ENCODE measurements at regions of chr12 and their contacts with region 1.

Region 1: GRCh38 chr12:57111031-57111734 is at the start of gene STAT6:
- DNase-seq: peak; percentile 96
- H3K4me3 Mint-ChIP-seq: peak within 1 kb of the TSS; percentile 92
- H3K27ac Mint-ChIP-seq: peak within 1 kb of the TSS; percentile 92
- H3K4me1 Mint-ChIP-seq: peaks cover 47% of the 10 kb centered on the region
- H3K27me3 Mint-ChIP-seq: peaks cover 1% of the 10 kb centered on the region
- total RNA-seq, gene STAT6: 304 and 319 TPM in 2 replicates

Region 2: DNA sequence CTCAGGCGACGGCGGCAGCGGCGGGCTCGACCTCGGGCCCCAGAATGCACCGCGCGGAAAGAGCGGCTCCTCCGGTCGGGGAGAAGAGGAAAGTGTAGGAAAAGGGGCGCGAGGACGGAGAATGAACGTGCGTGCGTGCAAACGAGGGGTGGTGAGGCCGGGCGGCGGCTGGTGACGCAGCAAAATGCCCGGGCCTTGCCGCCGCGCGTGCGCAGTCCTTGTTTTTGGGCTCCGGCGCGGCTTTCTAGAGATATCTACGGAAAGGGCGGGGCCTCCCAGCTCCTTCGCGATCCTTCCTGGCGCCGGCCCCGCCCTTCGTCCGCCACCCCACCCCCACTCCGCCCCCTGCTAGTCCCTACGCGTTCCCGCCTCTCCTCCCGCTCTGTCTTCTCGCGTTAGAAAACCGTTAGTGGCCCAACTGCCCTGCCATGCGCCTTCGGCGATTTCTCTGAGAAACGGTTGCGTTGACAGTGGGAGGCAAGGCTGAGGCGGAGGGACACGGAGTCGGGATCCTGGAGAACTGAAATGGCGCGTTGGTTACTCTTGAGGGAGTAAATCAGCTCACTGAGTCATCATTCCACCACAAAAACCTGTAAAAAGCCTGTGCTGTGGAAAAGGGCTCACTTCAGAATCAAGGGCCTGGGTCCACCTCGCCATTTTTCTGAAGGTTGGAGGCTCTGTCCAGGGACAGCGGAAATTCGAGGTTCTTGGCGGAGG is 422.9 kb before region 1 on chr12 and contains the start of gene PTGES3:
- intact Hi-C with region 1: loop called (anchors 2 kb)
- DNase-seq: peak; percentile 99
- H3K4me3 Mint-ChIP-seq: peak within 1 kb of the TSS; percentile 99
- H3K27ac Mint-ChIP-seq: peak within 1 kb of the TSS; percentile 97
- H3K4me1 Mint-ChIP-seq: peaks cover 24% of the 10 kb centered on the region
- H3K27me3 Mint-ChIP-seq: no peaks in the 10 kb centered on the region
- total RNA-seq, gene PTGES3: 351 and 357 TPM in 2 replicates

Region 3: GRCh38 chr12:57005980-57006808 is 105.0 kb before region 1 on chr12 and contains the start of gene ZBTB39:
- intact Hi-C with region 1: loop called (anchors 1 kb)
- DNase-seq: peak; percentile 92
- H3K4me3 Mint-ChIP-seq: peak within 1 kb of the TSS; percentile 93
- H3K27ac Mint-ChIP-seq: peak within 1 kb of the TSS; percentile 86
- H3K4me1 Mint-ChIP-seq: peaks cover 44% of the 10 kb centered on the region
- H3K27me3 Mint-ChIP-seq: no peaks in the 10 kb centered on the region
- total RNA-seq, gene ZBTB39: 11.0 TPM in 2 replicates

Region 4: DNA sequence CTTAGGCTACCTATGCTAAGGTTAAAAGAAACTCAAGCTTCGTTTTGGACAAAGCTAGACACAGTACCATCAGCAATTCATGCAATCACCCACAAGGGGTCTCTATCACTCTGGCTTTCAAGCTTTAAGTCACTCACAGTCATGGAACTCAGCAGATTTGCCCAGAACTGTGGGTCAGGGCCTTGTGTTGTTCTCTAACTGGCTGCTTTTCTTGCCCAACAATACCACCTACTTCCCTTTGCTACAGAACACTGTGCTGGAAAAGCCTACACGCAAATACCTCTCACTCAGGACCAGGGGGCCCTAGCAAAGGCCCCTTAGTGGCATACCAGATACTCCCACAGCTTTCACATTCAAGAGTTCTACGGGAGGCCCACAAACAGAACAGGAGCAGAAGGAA is 41.7 kb before region 1 on chr12:
- intact Hi-C with region 1: loop called (anchors 1 kb)
- DNase-seq: peak; percentile 90
- H3K4me3 Mint-ChIP-seq: peak overlapping the region; percentile 61
- H3K27ac Mint-ChIP-seq: peak overlapping the region; percentile 89
- H3K4me1 Mint-ChIP-seq: peaks cover 45% of the 10 kb centered on the region
- H3K27me3 Mint-ChIP-seq: no peaks in the 10 kb centered on the region

Region 5: DNA sequence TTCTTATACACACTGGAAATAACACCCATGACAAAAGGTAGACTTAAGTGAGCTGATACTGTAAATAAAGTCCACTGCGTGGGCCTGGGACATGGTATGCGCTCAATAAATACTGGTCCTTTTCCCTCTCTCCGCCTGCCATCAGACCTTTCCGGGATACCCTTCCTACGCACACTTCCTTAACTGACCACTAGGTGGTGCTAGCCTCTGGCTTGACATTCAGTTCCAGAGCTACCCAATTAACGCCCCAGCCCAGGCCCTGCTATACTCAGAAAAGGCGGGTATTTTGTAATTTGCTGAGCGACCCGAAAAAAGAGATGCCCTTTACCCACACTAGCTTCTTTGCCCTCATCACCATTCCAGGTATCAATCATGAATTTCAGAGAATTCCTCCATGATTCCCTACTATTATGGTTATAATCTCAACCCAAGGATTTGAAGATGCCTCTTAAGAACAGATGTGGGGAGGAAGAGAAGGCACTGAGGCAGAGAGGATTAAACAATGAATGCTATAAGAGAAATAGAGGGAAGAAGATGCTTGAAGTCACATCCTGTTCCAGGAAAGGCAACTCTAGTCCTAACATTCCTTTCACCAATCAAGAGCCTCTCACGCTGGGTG is 13.2 kb after region 1 on chr12:
- intact Hi-C with region 1: loop called (anchors 1 kb)
- DNase-seq: peak; percentile 93
- H3K4me3 Mint-ChIP-seq: no peak overlapping the region
- H3K27ac Mint-ChIP-seq: no peak overlapping the region
- H3K4me1 Mint-ChIP-seq: peaks cover 4% of the 10 kb centered on the region
- H3K27me3 Mint-ChIP-seq: peaks cover 31% of the 10 kb centered on the region

Measured in activated CD4-positive, alpha-beta T cell treated with anti-CD3 and anti-CD28 coated beads, Interleukin-2, amount 10 ng/mL, durations not matched to agents 24 days and 14 days (primary cell).